Posterior vena cava (tissue), 2 donors: ENCODE measurements at regions of chr14 and their contacts with region 1.

Region 1: GRCh38 chr14:95240859-95241733 is 78.6 kb downstream of the CLMN start:
- DNase-seq: peak; percentile 53

Region 2: DNA sequence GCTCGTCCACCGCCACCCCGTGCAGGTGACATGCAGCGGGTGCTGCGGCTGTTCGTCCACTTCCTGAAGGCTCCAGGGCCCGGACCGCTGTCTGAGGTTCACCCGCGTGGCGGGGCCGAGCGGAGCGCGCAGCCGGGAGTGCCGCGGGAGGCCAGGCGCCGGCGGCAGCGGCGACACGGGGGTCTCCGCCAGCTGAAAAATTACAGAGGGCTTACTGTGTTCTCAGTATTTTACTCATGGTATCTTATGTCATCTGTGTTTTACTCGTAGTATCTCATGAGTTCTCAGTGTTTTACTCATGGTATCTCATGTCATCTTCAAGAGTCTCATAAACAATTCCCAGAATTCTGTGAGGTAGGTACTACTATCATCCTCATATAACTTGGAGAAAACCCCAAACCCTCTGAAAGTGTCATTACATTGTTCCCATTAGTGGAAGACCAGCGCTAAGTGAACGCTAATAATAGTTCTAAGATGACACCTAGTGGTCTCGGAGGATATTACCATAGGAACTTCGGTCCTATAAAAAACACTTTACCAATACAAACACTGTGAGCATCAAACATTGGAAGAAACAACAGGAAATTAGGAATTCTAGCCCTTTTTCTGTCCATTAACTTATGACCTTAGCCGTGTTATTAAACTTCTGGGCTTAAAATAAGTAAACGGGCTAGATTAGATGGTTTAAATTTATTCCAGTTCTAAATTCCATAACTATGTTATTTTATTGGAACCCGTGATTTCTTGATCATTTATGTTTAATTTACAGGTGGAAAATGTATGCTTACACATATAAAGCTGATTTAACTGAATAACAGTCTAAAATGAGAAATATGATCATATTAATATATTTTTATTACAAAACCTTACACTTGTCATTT is 1183.3 kb after region 1 on chr14:
- intact Hi-C with region 1: loop called in 1 of 2 experiments (anchors 5 kb)
- DNase-seq: peak; percentile 83